ENCODE measurements at regions of chr1 and their contacts with region 1.

Region 1: GRCh38 chr1:19762175-19762779 is 37.4 kb downstream of the TMCO4 start:
- DNase-seq: no peak
- ATAC-seq: peak; percentile 60
- H3K4me3 ChIP-seq: no peak overlapping the region
- H3K27ac ChIP-seq: no peak overlapping the region
- H3K4me1 ChIP-seq: peaks cover 27 to 53% of the 10 kb centered on the region in 2 experiments
- H3K27me3 ChIP-seq: no peaks in the 10 kb centered on the region
- CTCF ChIP-seq: peak; percentile 75 to 92 (median 91)
- POLR2A ChIP-seq: no peak
- RAD21 ChIP-seq: peak; percentile 83

Region 2: GRCh38 chr1:19775320-19775719 is 13.0 kb after region 1 on chr1:
- CTCF ChIA-PET with region 1: no interaction called
- POLR2A ChIA-PET with region 1: no interaction called
- RAD21 ChIA-PET with region 1: no interaction called
- intact Hi-C with region 1: no loop called
- DNase-seq: no peak
- ATAC-seq: no peak
- H3K4me3 ChIP-seq: no peak overlapping the region
- H3K27ac ChIP-seq: no peak overlapping the region
- H3K4me1 ChIP-seq: no peaks in the 10 kb centered on the region; a peak in 1 of 4 replicates
- H3K27me3 ChIP-seq: no peaks in the 10 kb centered on the region
- CTCF ChIP-seq: no peak
- POLR2A ChIP-seq: no peak
- RAD21 ChIP-seq: no peak

Region 3: DNA sequence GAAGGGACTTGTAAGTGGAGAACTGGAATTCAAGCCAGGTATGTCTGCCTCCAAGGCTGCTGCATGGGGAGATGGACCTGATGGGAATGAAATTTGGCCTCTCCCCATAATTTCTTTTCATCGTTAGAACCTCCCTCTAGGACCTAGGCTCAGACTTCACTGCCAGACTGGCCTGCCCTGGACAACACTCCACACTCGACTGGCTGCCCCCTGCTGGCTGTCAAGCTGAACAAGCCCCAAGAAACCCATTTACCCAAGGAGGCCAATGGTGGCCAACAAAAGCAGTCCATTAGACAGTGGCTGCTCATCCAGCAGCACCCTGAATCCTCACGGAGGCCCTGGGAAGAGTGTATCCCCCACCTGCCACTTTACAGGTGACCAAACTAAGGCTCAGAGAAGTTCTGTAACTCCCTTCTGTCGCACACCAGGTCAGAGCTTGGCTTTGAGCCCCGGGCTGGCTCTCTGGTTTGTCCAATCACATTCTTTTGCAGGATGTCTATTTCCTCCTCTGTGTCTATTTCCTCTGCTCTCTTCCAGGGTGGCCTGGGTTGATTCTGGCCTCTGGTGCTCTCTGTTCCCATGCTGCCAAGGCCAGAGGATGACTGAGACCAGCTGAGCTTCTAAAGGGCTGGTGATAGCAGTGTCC is 49.1 kb after region 1 on chr1:
- CTCF ChIA-PET with region 1: interaction called, 6 read pairs
- POLR2A ChIA-PET with region 1: no interaction called
- RAD21 ChIA-PET with region 1: no interaction called
- intact Hi-C with region 1: loop called (anchors 1 kb)
- DNase-seq: peak; percentile 34
- ATAC-seq: peak; percentile 94
- H3K4me3 ChIP-seq: no peak overlapping the region
- H3K27ac ChIP-seq: no peak overlapping the region
- H3K4me1 ChIP-seq: no peaks in the 10 kb centered on the region; a peak in 1 of 4 replicates
- H3K27me3 ChIP-seq: no peaks in the 10 kb centered on the region
- CTCF ChIP-seq: peak; percentile 64 to 75 (median 69); a peak in 5 of 6 replicates
- POLR2A ChIP-seq: no peak
- RAD21 ChIP-seq: peak; percentile 63

Region 4: DNA sequence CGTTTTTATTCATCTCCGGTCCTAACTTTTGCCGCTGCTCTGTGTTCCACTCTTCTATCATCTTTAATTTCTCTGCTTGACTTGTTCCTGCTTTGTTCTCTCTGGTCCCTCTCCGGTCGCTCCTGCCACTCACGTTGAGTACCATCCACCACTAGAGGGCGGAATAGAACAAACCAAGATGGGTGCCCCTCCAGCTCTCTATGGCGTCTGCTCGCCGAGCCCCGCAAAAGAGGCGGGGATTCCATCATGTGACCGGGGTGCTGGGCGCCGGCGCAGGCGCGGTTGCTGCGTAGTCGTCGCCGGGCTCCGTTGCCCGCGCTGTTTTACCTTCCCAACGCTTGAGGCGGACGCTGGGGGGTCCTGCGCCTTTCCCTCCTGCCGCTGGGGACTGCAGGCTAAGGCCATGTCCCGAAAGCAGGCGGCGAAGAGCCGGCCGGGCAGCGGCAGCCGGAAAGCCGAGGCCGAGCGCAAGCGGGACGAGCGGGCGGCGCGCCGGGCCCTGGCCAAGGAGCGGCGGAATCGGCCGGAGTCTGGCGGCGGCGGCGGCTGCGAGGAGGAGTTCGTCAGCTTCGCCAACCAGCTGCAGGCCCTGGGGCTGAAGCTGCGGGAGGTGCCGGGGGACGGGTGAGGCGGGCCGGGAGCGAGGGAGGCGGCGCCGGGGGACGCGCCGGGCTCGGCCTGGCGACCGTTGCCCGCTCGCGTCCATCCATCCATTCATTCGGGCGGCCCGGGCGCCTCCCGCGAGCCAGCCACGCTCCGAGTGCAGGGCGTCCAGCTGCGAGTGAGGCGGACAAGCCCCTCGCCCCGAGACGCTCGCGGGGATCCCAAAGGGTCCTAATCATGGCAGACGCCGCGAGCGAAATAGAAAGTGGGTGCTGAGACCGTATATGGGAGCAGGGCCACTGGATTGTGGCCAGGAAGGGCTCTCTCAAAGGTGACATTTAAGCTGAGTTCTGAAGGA is 120.1 kb after region 1 on chr1 and contains the start of gene OTUD3:
- CTCF ChIA-PET with region 1: no interaction called
- POLR2A ChIA-PET with region 1: no interaction called
- RAD21 ChIA-PET with region 1: no interaction called
- intact Hi-C with region 1: loop called (anchors 5 kb)
- DNase-seq: peak; percentile 96
- ATAC-seq: peak; percentile 96
- H3K4me3 ChIP-seq: peak within 1 kb of the TSS; percentile 56 to 88
- H3K27ac ChIP-seq: peak within 1 kb of the TSS; percentile 78
- H3K4me1 ChIP-seq: peaks cover 9 to 18% of the 10 kb centered on the region in 2 experiments; a peak in 3 of 4 replicates
- H3K27me3 ChIP-seq: no peaks in the 10 kb centered on the region
- CTCF ChIP-seq: peak; percentile 77 to 90 (median 86)
- POLR2A ChIP-seq: peak; percentile 82
- RAD21 ChIP-seq: peak; percentile 88
- total RNA-seq, gene OTUD3: 15.0 TPM

Measured in HCT116 (cell line).